ENCODE measurements at regions of chr4 and their contacts with region 1.

Region 1: DNA sequence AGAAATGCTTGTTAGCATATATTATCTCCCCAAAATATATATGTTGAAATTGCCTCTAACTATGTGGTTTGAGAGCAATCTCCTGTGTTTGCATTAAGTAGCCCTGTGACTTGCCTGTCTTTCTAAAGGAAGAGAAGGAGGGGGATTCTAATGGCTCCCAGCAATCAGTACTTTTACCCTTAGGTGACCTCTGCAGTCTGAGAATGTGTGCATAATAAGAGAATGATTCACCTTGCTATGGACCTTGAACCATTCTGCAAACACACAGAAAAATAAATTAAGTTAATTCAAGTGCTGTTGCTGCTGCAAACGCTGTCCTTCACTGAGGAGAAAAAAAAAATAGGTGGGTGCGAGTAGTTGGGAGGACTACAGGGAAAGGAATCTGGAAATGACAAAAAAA is 322.2 kb downstream of the IQCM start:
- DNase-seq: peak in 1 of 2 experiments; percentile 26
- H3K4me3 ChIP-seq: no peak overlapping the region
- H3K4me3 Mint-ChIP-seq: no peak overlapping the region
- H3K27ac Mint-ChIP-seq: no peak overlapping the region
- H3K4me1 ChIP-seq: no peaks in the 10 kb centered on the region; the same call in 1 of the 2 replicates
- H3K4me1 Mint-ChIP-seq: peaks cover 8% of the 10 kb centered on the region
- H3K27me3 ChIP-seq: no peaks in the 10 kb centered on the region
- H3K27me3 Mint-ChIP-seq: no peaks in the 10 kb centered on the region
- CTCF ChIP-seq: no peak

Region 2: GRCh38 chr4:149145803-149146202 is 347.7 kb before region 1 on chr4:
- CTCF ChIA-PET with region 1: no interaction called
- POLR2A ChIA-PET with region 1: no interaction called
- intact Hi-C with region 1: no loop called
- DNase-seq: no peak
- H3K4me3 ChIP-seq: no peak overlapping the region
- H3K4me3 Mint-ChIP-seq: no peak overlapping the region
- H3K27ac Mint-ChIP-seq: no peak overlapping the region
- H3K4me1 ChIP-seq: no peaks in the 10 kb centered on the region
- H3K4me1 Mint-ChIP-seq: no peaks in the 10 kb centered on the region
- H3K27me3 ChIP-seq: no peaks in the 10 kb centered on the region
- H3K27me3 Mint-ChIP-seq: peaks cover 19% of the 10 kb centered on the region
- CTCF ChIP-seq: no peak

Region 3: DNA sequence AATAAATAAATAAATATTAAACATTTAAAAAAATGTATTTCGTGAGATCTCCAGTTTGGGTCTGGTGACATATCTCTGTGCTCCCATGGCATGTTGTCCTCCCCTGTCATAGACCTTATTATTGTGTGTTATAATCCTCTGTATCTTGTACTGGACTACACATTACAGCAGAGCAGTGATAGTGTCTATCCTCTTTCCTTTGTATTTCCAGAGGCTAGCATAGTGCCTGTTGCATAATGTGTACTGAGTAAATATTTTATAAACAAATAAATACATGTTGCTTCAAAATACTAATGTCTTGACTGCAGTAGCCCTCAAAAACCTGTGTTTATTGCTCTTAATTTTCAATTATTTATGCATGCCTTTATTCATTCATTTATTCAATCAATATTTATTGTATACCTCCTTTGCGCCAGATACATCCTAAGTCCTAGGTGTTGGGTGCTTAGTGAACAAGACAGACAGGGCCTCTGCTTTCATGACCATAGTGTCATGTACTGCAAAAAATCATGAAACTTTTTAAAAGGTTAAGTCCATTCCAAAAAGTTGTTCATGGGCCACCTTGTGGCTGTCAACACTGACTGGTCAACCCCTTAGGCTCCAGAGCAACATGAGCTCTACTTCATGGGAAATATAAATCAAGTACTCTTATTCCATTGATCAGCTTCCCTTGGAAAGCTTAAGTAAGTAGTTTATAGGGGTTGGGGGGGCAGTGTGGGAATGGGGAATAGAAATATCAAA is 18.2 kb after region 1 on chr4:
- CTCF ChIA-PET with region 1: no interaction called
- POLR2A ChIA-PET with region 1: no interaction called
- intact Hi-C with region 1: no loop called
- DNase-seq: no peak
- H3K4me3 ChIP-seq: no peak overlapping the region
- H3K4me3 Mint-ChIP-seq: no peak overlapping the region
- H3K27ac Mint-ChIP-seq: no peak overlapping the region
- H3K4me1 ChIP-seq: no peaks in the 10 kb centered on the region
- H3K4me1 Mint-ChIP-seq: no peaks in the 10 kb centered on the region
- H3K27me3 ChIP-seq: no peaks in the 10 kb centered on the region
- H3K27me3 Mint-ChIP-seq: no peaks in the 10 kb centered on the region
- CTCF ChIP-seq: no peak

Region 4: GRCh38 chr4:149521611-149522425 is 28.3 kb after region 1 on chr4:
- CTCF ChIA-PET with region 1: no interaction called
- POLR2A ChIA-PET with region 1: no interaction called
- intact Hi-C with region 1: loop called (anchors 2 kb)
- DNase-seq: no peak
- H3K4me3 ChIP-seq: no peak overlapping the region
- H3K4me3 Mint-ChIP-seq: no peak overlapping the region
- H3K27ac Mint-ChIP-seq: no peak overlapping the region
- H3K4me1 ChIP-seq: no peaks in the 10 kb centered on the region
- H3K4me1 Mint-ChIP-seq: no peaks in the 10 kb centered on the region
- H3K27me3 ChIP-seq: no peaks in the 10 kb centered on the region
- H3K27me3 Mint-ChIP-seq: no peaks in the 10 kb centered on the region
- CTCF ChIP-seq: no peak